ENCODE measurements at regions of chr10 and their contacts with region 1.

Region 1: GRCh38 chr10:122525788-122526187 is 34.8 kb upstream of the DMBT1 start:
- DNase-seq: no peak
- ATAC-seq: peak; percentile 78
- H3K4me3 ChIP-seq: no peak overlapping the region
- H3K27ac ChIP-seq: no peak overlapping the region
- H3K4me1 ChIP-seq: peaks cover 6% of the 10 kb centered on the region
- H3K27me3 ChIP-seq: no peaks in the 10 kb centered on the region
- CTCF ChIP-seq: peak; percentile 52

Region 2: GRCh38 chr10:122435212-122435827 is 90.5 kb before region 1 on chr10:
- intact Hi-C with region 1: no loop called
- DNase-seq: no peak
- ATAC-seq: peak; percentile 57
- H3K4me3 ChIP-seq: no peak overlapping the region
- H3K27ac ChIP-seq: no peak overlapping the region
- H3K4me1 ChIP-seq: no peaks in the 10 kb centered on the region
- H3K27me3 ChIP-seq: no peaks in the 10 kb centered on the region
- CTCF ChIP-seq: peak; percentile 65

Region 3: DNA sequence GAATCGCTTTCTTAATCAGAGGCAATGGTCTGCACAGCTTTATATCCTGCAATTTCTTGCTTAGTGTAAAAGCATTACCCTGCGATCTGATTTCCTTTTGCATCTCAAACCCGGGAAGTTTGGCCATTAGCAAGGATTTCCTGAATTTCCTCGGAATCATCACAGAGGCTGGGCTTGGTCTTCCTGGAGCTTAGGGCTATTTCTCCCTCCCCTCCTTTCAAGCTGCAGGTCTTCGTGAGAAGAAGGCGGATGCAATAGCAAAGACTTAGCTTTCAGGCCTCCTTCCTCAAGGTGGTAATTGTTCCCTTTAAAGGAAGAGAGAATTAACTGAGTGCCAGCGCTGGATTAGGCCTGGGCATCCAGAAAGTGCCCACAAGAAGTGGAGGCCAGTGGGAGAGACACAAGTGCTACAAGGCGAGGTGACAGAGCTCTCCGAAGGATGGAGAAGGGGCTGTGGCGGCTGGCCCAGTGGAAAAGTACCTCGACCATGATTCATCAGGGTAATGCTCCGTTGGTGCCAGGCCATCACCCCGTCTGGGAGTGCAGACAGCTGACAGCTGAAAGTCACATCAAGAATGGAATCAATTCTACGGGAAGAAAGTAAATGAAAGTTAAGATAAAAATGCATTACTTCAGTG is 75.3 kb before region 1 on chr10:
- intact Hi-C with region 1: no loop called
- DNase-seq: no peak
- ATAC-seq: no peak
- H3K4me3 ChIP-seq: no peak overlapping the region
- H3K27ac ChIP-seq: no peak overlapping the region
- H3K4me1 ChIP-seq: no peaks in the 10 kb centered on the region
- H3K27me3 ChIP-seq: no peaks in the 10 kb centered on the region
- CTCF ChIP-seq: no peak

Region 4: DNA sequence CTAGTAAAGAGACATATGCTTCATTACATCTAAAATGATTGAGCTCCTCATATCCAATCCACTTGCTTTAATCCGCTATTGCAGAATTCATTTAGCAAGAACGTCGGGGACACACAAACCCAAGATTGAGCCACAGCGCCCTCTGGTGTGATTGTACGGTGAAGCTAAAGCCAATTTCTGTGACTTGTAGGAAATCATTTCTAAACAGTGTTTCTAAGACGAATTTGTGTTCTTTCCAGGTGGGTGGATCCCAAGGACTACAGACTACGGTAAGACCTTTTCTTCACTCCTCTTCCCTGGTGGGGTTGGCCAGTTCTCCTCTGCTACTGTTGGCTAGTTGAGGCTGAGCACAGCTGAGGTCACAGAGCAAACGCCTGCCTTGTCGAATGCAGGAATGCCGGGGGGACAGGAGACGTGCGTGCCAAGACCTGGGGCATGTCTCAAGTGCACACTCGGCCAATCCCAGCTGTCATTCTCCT is 40.0 kb after region 1 on chr10:
- intact Hi-C with region 1: loop called (anchors 5 kb)
- DNase-seq: peak; percentile 81
- ATAC-seq: peak; percentile 77
- H3K4me3 ChIP-seq: no peak overlapping the region
- H3K27ac ChIP-seq: no peak overlapping the region
- H3K4me1 ChIP-seq: no peaks in the 10 kb centered on the region
- H3K27me3 ChIP-seq: peaks cover 5% of the 10 kb centered on the region
- CTCF ChIP-seq: peak; percentile 85

Region 5: GRCh38 chr10:122754491-122755235 is 228.9 kb after region 1 on chr10:
- intact Hi-C with region 1: no loop called
- DNase-seq: no peak
- ATAC-seq: no peak
- H3K4me3 ChIP-seq: no peak overlapping the region
- H3K27ac ChIP-seq: no peak overlapping the region
- H3K4me1 ChIP-seq: no peaks in the 10 kb centered on the region
- H3K27me3 ChIP-seq: no peaks in the 10 kb centered on the region
- CTCF ChIP-seq: no peak

Region 6: GRCh38 chr10:123331438-123331837 is 805.6 kb after region 1 on chr10:
- intact Hi-C with region 1: no loop called
- DNase-seq: no peak
- ATAC-seq: no peak
- H3K4me3 ChIP-seq: no peak overlapping the region
- H3K27ac ChIP-seq: no peak overlapping the region
- H3K4me1 ChIP-seq: no peaks in the 10 kb centered on the region
- H3K27me3 ChIP-seq: no peaks in the 10 kb centered on the region
- CTCF ChIP-seq: no peak

Measured in upper lobe of right lung (tissue), 1 donor.